ENCODE measurements at regions of chr13 and their contacts with region 1.

Region 1: DNA sequence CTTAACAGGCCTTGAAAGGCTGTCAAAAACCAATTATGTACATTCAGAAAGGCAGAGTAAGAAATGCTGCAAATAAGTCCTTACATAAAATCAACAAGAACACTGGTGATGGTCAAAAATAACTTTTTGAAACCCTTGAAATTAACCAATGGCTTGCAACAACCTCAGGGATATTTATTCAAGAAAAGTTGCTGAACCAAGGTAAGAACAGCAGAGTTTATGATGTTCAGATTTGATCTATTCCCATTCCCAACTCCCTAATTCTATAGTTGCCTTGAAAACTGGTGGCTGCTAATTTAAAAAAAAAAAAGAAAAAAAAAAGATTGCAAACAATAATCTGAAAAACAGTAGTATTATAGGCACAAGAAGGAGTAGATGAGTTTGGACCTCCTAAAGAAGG is 109.8 kb upstream of the UFM1 start:
- DNase-seq: no peak
- H3K4me3 ChIP-seq: no peak overlapping the region
- CTCF ChIP-seq: no peak

Region 2: DNA sequence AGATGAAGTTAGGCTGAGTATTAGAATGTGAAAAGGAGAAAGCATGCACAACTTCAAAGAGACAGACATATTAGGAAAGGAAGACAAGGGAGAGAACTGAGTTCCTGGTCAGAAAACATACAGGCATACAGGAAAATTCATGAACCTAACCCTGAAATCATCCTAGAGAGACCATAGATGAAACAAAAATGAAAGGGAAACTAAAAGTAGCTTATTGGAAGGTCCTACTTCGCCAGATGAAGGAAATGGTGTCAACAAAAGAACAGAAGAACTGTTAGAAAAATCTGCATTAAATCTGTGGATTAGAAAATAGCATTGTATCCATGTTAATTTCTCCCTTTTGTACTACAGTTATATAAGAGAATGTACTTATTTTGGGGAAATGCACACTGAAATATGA is 59.2 kb before region 1 on chr13:
- in situ Hi-C with region 1: loop called (anchors 5 kb)
- DNase-seq: no peak
- H3K4me3 ChIP-seq: no peak overlapping the region
- CTCF ChIP-seq: no peak